Mammary epithelial cell (primary cell): ENCODE measurements at regions of chr9 and their contacts with region 1.

Region 1: DNA sequence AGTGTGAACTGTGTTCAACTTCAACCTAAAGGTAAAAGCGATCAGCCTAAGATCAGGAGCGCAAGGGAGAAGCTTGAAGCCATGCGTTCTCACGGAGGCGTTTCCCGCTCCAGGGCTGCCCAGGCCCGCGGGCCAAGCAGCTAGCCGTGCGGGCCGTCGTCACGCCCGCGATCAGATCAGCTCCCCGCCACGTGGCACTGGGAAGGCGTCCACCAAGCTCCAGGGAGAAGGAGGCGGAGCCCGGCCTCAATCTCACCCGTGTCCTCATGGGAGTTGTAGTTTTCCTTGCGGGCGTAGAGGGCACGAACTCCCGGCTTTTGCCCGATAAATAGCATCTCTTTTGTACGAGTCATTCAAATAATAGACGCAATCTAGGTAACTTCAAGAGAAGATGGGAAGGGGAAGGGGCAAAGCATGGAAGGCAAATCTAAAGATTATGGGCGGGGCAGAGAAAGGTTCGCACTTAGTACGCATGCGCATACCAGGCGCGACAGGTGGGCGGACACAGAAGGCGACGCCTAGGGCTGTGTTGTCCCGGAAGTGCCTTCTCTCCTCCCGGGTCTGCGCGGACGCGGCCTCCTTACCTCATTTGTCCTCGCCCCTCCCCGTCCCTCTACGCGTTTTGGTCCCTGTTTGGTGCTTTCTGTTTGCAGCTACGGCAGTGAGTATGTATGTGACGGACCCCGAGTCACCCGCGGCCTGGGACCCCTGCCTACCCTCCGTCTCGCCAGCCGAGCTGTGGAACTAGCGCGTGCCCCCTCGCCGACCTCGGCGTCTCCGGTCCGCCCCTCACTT is 40.8 kb upstream of the ZCCHC7 start:
- DNase-seq: peak; percentile 88
- H3K4me3 ChIP-seq: peak overlapping the region; percentile 79 to 96 (median 92)
- H3K27ac ChIP-seq: peak overlapping the region; percentile 68
- H3K4me1 ChIP-seq: peaks cover 9% of the 10 kb centered on the region
- H3K27me3 ChIP-seq: no peaks in the 10 kb centered on the region
- CTCF ChIP-seq: no peak

Region 2: GRCh38 chr9:37119907-37120842 is 40.6 kb after region 1 on chr9 and contains the start of gene ZCCHC7:
- CTCF ChIA-PET with region 1: no interaction called
- dilution Hi-C with region 1: no loop called
- in situ Hi-C with region 1: no loop called
- intact Hi-C with region 1: loop called (anchors 2 kb)
- DNase-seq: peak; percentile 92
- H3K4me3 ChIP-seq: peak within 1 kb of the TSS; percentile 69 to 99 (median 93)
- H3K27ac ChIP-seq: peak within 1 kb of the TSS; percentile 84
- H3K4me1 ChIP-seq: peaks cover 9% of the 10 kb centered on the region
- H3K27me3 ChIP-seq: no peaks in the 10 kb centered on the region
- CTCF ChIP-seq: no peak
- total RNA-seq, gene ZCCHC7: 15.8 to 25.5 TPM